Left lung (tissue), 14 donors: ENCODE measurements at regions of chr20 and their contacts with region 1.

Region 1: DNA sequence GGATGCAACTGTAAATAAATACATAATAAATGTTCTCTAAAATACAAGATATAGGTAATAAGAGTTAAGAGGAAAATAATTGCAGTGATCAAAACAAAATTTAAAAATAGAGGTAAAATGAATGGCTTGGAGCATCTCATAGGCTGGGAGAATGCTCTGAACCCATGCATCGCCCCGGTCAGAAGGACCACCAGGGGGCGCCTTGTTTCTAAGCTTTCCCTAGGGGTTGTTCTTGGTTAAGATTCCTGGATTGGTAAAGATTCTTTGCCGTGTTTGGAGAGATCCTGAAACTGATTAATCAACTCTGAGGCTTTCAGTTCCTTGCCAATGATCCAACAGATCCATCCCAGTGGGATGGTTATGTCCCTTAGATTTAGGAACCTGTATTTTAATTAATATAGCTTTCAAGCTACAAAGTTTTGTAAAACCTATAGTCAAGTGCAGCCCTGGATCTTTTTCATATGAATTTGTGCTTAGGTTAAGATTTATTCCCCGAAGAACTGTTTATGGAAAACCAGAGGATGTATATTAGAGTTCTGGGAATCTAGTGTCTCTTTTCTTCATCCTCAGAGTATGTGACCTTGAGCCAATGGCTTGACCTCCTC is 45.3 kb upstream of the PRELID3B start:
- DNase-seq: peak; percentile 56 to 91 (median 78)
- ATAC-seq: peak; percentile 97
- H3K4me3 ChIP-seq: no peak overlapping the region
- H3K27ac ChIP-seq: no peak overlapping the region
- H3K4me1 ChIP-seq: peaks cover 0 to 4% of the 10 kb centered on the region in 2 donors
- H3K27me3 ChIP-seq: peaks cover 0 to 8% of the 10 kb centered on the region in 2 donors
- CTCF ChIP-seq: peak; percentile 87 to 96

Region 2: DNA sequence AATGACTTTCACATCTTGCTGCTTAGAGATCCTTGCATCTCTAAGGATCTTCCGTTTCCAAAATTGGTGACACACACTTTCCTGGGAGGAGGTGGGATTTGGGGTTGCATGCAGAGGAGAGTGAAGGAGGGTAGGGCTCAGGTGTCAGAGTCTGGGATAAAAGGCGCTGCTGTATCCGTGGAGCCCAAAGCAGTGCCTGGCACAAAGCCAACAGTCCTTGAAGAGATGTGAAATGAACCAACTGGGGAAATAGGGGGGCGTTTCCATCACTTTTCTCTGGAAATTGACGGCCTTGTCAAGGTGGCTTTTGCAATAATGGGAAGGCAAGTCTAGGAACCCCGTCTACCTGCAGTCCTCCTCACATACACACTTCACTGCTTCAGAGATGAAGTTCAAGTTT is 166.4 kb before region 1 on chr20:
- intact Hi-C with region 1: no loop called
- DNase-seq: no peak
- ATAC-seq: no peak
- H3K4me3 ChIP-seq: no peak overlapping the region
- H3K27ac ChIP-seq: no peak overlapping the region
- H3K4me1 ChIP-seq: no peaks in the 10 kb centered on the region
- H3K27me3 ChIP-seq: no peaks in the 10 kb centered on the region
- CTCF ChIP-seq: no peak

Region 3: DNA sequence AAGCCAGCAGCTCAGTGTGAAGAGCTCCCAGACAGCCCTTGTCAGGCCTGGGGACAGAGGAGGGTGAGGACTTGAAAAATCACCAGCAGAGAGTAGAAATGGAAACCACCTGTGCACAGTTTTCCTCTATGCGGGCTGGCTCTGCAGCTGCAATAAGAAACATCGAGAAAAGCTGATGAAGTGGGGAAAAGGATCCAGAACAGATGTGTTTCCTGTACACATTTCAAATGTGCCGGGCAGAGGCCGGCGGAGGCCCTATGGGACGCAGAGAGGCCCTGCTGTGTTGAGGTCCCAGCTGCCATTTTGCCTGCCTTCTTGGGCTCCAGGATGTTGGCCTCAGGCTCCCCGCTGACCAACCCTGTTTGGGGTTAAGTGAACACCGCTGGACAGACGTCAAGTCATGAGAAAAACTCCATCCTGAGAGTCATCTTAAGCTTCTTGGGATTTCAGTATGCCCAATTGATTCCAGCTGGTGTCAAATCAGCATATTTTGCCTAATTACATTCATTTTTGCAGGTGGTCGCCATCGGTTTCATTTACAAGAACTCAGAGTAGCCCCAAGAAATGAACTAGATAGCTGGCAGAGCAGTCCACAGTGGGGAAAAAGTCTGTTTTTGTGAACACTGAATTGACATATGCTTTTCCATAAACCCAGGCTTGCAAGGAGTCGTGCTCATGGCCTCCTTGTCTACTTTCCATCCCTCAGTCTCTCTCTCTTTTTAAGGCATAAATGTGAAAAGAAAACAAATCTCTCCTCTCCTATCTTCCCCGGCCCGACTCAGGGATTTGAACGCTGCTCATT is 366.0 kb after region 1 on chr20:
- intact Hi-C with region 1: loop called in 1 of 2 experiments (anchors 5 kb)
- DNase-seq: peak in 2 of 4 donors; percentile 44 to 65
- ATAC-seq: no peak
- H3K4me3 ChIP-seq: no peak overlapping the region
- H3K27ac ChIP-seq: no peak overlapping the region
- H3K4me1 ChIP-seq: no peaks in the 10 kb centered on the region
- H3K27me3 ChIP-seq: peaks cover 0 to 43% of the 10 kb centered on the region in 2 donors
- CTCF ChIP-seq: no peak